ENCODE measurements at regions of chr6 and their contacts with region 1.

Region 1: DNA sequence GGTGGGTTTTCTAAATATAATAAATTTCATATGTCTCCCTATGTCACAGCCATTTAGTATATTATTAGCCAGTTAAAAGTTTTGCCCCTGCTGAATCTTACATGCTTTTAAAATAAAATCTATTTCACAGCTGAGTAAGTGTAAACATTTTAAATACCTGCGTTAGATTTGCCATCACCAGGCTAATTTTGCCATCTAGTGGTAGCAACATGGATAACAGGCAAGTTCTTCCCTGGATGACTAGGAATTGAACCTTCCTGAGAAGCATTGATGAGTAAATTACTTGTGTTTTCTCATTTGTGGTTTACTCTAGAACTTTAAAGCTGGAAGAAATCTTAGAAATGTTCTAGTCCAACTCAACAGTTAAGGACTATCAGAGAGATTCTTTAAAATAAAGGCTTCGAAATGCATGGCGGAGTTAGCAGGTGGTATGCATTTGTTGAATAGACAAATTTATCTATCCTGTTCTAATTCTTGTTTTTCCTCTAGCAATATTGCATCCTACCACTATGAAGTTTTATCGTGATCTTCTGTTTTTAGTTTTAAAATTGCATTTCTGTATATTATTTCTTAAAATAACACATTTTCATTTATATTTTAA is 2.6 kb downstream of the PRSS35 start:
- DNase-seq: peak; percentile 72
- ATAC-seq: no peak
- H3K4me3 ChIP-seq: no peak overlapping the region
- H3K27ac ChIP-seq: no peak overlapping the region
- H3K4me1 ChIP-seq: no peaks in the 10 kb centered on the region
- H3K27me3 ChIP-seq: peaks cover 8% of the 10 kb centered on the region; the same call in 1 of the 2 replicates
- CTCF ChIP-seq: peak; percentile 78; the same call in 1 of the 2 replicates

Region 2: GRCh38 chr6:83067448-83068413 is 447.2 kb before region 1 on chr6 and contains the start of gene DOP1A:
- CTCF ChIA-PET with region 1: interaction called, 6 read pairs
- POLR2A ChIA-PET with region 1: no interaction called
- in situ Hi-C with region 1: no loop called
- intact Hi-C with region 1: loop called (anchors 5 kb)
- DNase-seq: peak; percentile 78
- ATAC-seq: peak; percentile 97
- H3K4me3 ChIP-seq: peak within 1 kb of the TSS; percentile 78 to 86
- H3K27ac ChIP-seq: peak within 1 kb of the TSS; percentile 83
- H3K4me1 ChIP-seq: peaks cover 31% of the 10 kb centered on the region
- H3K27me3 ChIP-seq: no peaks in the 10 kb centered on the region
- CTCF ChIP-seq: peak; percentile 96
- total RNA-seq, gene DOP1A: 13.4 TPM

Region 3: DNA sequence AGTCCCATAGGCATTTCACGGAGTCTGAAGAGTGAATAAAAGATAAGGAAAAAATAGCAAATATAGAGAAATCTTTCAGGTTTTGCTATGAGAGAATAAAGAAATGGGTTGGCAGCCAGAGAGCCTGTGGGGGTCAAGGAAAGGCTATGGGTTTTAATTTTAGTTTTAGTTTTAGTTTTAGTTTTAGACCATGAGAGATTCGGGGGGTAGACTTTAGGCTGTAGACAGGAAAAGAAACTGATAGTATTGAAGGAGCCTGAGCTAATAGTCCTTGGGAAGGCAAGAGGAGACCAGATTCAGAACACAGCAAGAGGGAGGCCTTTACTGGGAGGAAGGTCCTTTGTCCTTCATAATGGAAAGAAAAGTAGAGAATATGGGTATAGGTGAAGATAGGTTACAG is 428.2 kb before region 1 on chr6:
- CTCF ChIA-PET with region 1: no interaction called
- POLR2A ChIA-PET with region 1: no interaction called
- in situ Hi-C with region 1: loop called (anchors 25 kb)
- intact Hi-C with region 1: no loop called
- DNase-seq: no peak
- ATAC-seq: no peak
- H3K4me3 ChIP-seq: no peak overlapping the region
- H3K27ac ChIP-seq: no peak overlapping the region
- H3K4me1 ChIP-seq: no peaks in the 10 kb centered on the region; the same call in 1 of the 2 replicates
- H3K27me3 ChIP-seq: no peaks in the 10 kb centered on the region
- CTCF ChIP-seq: no peak

Region 4: GRCh38 chr6:83221889-83222479 is 293.0 kb before region 1 on chr6:
- CTCF ChIA-PET with region 1: interaction called, 4 read pairs
- POLR2A ChIA-PET with region 1: no interaction called
- in situ Hi-C with region 1: no loop called
- intact Hi-C with region 1: loop called (anchors 1 kb)
- DNase-seq: no peak
- ATAC-seq: no peak
- H3K4me3 ChIP-seq: no peak overlapping the region
- H3K27ac ChIP-seq: no peak overlapping the region
- H3K4me1 ChIP-seq: no peaks in the 10 kb centered on the region
- H3K27me3 ChIP-seq: no peaks in the 10 kb centered on the region
- CTCF ChIP-seq: peak; percentile 67; the same call in 1 of the 2 replicates

Region 5: DNA sequence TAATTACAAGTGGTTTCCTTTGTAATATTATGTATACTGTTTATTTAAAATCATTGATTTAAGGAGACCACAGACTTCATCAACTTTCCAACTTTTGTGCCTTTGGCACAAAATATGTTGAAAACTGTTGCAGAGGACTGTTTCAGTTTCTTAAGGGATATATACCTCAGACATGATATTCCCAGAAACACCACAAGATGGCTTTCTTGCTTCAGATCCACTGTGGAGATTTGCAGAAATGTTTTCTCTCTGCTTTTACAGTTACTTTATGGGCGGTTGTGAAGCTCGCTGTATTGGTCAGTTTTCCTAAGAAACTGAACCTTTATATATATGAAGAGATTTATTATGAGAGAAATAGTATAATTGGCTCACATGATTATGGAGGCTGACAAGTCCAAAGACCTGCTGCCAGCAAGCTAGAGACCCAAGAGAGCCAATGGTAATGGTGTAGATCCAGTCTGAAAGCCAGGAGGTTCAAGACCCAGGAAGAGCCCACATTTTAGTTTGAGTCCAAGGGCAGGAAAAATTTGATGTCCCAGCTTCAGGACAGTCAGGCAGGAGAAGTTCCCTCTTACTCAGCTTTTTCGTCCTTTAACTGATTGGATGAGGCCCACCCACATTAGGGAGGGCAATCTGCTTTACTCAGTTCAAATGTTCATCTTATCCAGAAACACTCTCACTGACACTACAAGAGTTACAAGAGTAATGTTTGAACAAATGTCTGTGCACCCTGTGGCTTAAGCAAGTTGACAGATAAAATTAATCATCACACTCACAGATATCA is 96.9 kb before region 1 on chr6:
- CTCF ChIA-PET with region 1: interaction called, 8 read pairs
- POLR2A ChIA-PET with region 1: interaction called, 4 read pairs
- in situ Hi-C with region 1: no loop called
- intact Hi-C with region 1: loop called (anchors 1 kb)
- DNase-seq: peak; percentile 32
- ATAC-seq: peak; percentile 92
- H3K4me3 ChIP-seq: no peak overlapping the region
- H3K27ac ChIP-seq: no peak overlapping the region
- H3K4me1 ChIP-seq: no peaks in the 10 kb centered on the region
- H3K27me3 ChIP-seq: no peaks in the 10 kb centered on the region
- CTCF ChIP-seq: peak; percentile 71; the same call in 1 of the 2 replicates

Region 6: DNA sequence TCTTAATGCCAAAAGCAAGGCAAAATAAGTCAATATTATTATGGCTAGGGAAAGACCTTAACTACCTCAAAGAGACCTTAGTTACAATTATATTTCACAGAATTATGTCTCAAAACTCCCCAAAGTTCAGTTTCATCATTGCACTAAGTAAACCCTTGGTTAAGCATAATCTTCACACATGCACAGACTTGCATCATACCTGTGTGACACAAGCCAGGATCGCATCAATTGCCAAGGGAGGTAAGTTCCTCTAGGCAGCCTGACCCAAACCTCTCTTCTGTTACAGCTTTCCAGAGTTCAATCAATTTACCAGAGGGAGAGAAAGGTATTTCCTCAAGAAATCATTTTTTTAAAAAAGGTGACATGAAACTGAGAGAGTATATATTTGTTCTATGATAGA is 34.5 kb before region 1 on chr6:
- CTCF ChIA-PET with region 1: interaction called, 10 read pairs
- POLR2A ChIA-PET with region 1: no interaction called
- in situ Hi-C with region 1: no loop called
- intact Hi-C with region 1: no loop called
- DNase-seq: no peak
- ATAC-seq: no peak
- H3K4me3 ChIP-seq: no peak overlapping the region
- H3K27ac ChIP-seq: no peak overlapping the region
- H3K4me1 ChIP-seq: no peaks in the 10 kb centered on the region
- H3K27me3 ChIP-seq: no peaks in the 10 kb centered on the region
- CTCF ChIP-seq: no peak

Measured in Panc1 (cell line).